AG04449 (cell line): ENCODE measurements at regions of chr22 and their contacts with region 1.

Region 1: GRCh38 chr22:32411829-32412592 is at the start of gene RTCB:
- DNase-seq: peak; percentile 68
- H3K4me3 ChIP-seq: peak within 1 kb of the TSS; percentile 83
- CTCF ChIP-seq: no peak

Region 2: DNA sequence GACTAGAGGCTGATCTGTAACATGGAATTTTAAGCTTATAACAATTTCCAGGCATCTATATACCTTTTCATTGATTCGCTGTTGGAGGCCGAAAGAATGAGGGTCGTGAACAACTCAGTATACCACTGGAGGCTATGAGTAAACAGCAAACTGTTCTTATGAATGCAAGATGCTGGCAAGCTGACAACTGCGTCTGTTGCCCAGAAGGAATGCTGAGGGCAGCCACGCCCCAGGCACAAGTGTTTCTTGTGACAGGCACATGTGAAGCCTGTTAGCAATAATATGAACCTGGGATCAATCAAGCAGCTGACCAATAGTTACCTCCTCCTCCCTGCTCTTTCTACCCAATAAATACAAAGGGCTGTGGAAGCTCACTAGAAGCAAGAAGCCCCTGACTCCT is 15.3 kb before region 1 on chr22:
- CTCF ChIA-PET with region 1: interaction called, 26 read pairs
- POLR2A ChIA-PET with region 1: interaction called, 5 read pairs
- DNase-seq: no peak
- H3K4me3 ChIP-seq: no peak overlapping the region
- CTCF ChIP-seq: no peak

Region 3: DNA sequence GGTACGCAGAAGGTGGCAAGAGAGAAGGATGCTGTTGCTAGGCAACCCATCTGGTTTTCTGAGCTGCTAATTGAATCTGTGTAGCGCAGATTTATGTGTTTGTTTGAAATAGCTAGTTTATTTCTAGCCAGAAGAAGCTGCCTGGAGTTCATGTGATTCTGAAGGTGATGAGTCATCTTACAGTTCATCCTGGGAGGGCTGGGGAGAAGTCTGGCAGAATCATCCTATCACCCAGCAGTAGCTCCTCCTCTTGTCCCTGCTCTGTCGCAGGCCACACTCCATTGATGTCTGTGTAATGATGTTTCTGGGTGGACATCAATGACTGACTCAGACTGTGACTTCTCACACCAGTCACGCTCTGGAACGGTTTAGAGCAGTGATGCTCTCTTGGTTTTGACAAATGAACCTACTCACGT is 57.8 kb after region 1 on chr22:
- CTCF ChIA-PET with region 1: interaction called, 50 read pairs
- POLR2A ChIA-PET with region 1: no interaction called
- DNase-seq: peak; percentile 60
- H3K4me3 ChIP-seq: no peak overlapping the region
- CTCF ChIP-seq: no peak

Region 4: DNA sequence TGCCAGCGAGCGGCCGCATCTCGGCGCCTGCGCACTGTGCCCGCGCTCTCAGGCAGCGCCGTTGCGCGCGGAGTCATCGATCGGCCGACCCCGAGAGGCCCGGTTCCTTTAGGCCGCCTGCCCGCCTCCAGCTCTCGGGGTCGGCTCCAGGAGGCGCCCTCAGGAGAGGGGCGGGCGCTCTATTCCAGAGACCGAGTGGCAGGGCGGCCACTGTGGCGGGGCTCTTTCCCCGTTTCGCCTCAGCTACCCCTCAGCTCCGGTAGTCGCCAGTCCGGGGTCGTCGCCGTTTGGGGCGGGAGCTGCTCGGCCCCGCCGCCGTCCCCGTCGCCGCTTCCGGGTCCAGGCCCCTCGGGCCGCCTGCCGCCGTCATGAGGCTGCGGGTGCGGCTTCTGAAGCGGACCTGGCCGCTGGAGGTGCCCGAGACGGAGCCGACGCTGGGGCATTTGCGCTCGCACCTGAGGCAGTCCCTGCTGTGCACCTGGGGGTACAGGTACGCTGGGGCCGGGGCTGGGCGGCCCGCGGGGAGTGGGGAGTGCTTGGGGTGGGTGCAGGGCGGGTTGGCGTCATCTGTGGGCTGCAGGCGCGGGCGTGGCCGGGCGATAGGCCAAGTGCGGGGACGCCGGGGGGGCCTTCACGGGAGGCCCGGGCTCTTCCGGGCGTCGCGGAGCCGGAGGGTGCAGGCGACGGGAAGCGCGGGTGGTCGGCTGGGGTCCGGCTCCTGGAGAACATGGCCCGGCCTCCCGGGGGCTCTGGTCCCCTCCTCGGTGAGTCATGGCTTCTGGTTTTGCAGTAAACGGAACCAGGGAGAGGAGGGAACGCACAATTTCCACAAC is 62.8 kb after region 1 on chr22 and contains the start of gene FBXO7:
- CTCF ChIA-PET with region 1: interaction called, 50 read pairs
- POLR2A ChIA-PET with region 1: no interaction called
- DNase-seq: peak; percentile 36
- H3K4me3 ChIP-seq: peak within 1 kb of the TSS; percentile 89
- CTCF ChIP-seq: peak; percentile 75

Region 5: DNA sequence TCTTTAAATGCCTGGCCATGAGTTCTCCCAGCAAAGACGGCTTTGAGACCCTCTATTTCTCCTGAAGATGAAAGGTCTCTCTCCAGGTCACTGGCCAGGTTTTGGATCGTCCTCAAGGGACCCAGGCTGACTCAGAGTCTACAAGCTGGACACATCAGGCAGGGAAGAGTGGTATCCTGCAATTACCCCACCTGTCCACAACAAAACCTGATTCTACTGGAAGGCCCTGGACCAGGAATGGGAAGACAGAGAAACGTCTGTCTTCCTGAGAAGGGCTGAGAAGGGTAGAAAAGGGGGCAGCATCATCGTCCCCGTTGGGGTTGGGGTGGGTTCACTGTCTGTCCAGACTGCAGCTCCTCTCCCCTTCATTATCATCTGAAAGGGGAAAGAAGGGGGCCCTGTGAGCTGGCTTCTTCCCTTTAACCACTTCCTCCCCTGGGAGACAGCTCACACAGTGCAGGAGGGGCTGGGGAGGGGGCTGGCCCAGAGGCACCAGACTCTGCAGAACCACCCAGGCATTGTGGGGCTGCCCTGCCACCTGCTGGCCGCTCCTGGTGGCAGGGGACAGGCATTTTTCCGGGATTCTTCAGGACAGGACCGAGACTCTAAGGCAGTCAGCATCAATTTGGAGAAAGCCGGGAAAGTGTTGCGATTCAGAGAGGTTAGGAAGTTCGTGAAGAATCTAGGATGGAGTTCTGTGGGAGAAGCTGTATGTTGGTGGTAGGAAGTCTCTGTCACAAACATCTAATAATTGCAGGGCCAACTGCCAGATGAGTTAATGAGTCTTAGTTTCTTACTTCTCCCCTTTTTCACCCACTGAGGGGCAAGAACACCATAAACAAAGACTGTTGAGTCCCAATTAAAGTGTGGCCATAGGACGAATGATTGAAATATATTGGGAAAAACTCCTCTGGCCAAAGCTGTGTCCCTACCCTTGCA is 588.6 kb after region 1 on chr22:
- CTCF ChIA-PET with region 1: interaction called, 12 read pairs
- POLR2A ChIA-PET with region 1: no interaction called
- DNase-seq: no peak
- H3K4me3 ChIP-seq: no peak overlapping the region
- CTCF ChIP-seq: peak; percentile 96